Panc1 (cell line): ENCODE measurements at regions of chr20 and their contacts with region 1.

Region 1: DNA sequence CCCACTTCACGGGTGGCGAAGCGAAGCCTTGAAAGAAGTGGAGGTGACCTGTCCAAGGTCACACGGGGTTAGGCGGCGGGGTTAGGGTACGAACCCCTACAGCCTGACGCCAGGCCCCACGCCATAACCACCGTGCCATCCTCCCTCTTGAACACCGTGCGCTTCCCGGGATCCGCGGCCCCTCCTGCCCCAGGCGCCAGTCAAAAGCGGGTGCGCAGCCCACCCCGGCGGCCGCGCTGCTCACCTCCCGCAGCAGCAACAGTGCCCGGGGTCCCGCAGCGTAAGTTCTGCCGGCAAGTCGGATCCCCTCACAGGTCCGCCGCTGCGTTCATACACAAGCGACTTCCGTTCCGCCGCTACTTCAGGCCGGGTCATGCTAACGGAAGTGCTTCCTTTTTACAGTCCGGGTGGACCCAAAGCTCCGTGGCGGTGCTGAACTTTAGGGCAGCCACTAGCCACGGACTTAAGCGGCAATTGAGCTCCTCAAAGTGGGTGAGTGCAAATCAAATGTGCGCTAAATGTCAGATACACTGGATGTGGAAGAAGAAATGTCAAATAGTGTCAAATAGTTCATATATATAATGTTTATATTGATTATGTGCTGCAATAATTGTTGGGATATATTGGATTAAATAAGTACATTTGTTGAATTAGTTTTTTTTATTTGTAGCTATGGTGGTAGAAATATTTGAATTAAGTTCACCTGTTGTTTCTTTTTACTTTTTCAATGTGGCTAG is at the start of gene CDK5RAP1:
- DNase-seq: peak; percentile 71
- ATAC-seq: peak; percentile 98
- H3K4me3 ChIP-seq: peak within 1 kb of the TSS; percentile 89 to 99
- H3K27ac ChIP-seq: peak within 1 kb of the TSS; percentile 87
- H3K4me1 ChIP-seq: peaks cover 4% of the 10 kb centered on the region; the same call in 1 of the 2 replicates
- H3K27me3 ChIP-seq: no peaks in the 10 kb centered on the region
- CTCF ChIP-seq: no peak
- total RNA-seq, gene CDK5RAP1: 34.8 TPM

Region 2: GRCh38 chr20:33217052-33217451 is 184.3 kb before region 1 on chr20 and contains the start of gene BPIFA3:
- CTCF ChIA-PET with region 1: no interaction called
- POLR2A ChIA-PET with region 1: no interaction called
- in situ Hi-C with region 1: no loop called
- intact Hi-C with region 1: no loop called
- DNase-seq: no peak
- ATAC-seq: no peak
- H3K4me3 ChIP-seq: no peak within 1 kb of the TSS
- H3K27ac ChIP-seq: no peak within 1 kb of the TSS
- H3K4me1 ChIP-seq: no peaks in the 10 kb centered on the region
- H3K27me3 ChIP-seq: peaks cover 20% of the 10 kb centered on the region
- CTCF ChIP-seq: no peak
- total RNA-seq, gene BPIFA3: not detected

Region 3: GRCh38 chr20:33318096-33318429 is 83.3 kb before region 1 on chr20:
- CTCF ChIA-PET with region 1: no interaction called
- POLR2A ChIA-PET with region 1: no interaction called
- in situ Hi-C with region 1: no loop called
- intact Hi-C with region 1: no loop called
- DNase-seq: no peak
- ATAC-seq: no peak
- H3K4me3 ChIP-seq: no peak overlapping the region
- H3K27ac ChIP-seq: no peak overlapping the region
- H3K4me1 ChIP-seq: no peaks in the 10 kb centered on the region; the same call in 1 of the 2 replicates
- H3K27me3 ChIP-seq: no peaks in the 10 kb centered on the region
- CTCF ChIP-seq: no peak

Region 4: DNA sequence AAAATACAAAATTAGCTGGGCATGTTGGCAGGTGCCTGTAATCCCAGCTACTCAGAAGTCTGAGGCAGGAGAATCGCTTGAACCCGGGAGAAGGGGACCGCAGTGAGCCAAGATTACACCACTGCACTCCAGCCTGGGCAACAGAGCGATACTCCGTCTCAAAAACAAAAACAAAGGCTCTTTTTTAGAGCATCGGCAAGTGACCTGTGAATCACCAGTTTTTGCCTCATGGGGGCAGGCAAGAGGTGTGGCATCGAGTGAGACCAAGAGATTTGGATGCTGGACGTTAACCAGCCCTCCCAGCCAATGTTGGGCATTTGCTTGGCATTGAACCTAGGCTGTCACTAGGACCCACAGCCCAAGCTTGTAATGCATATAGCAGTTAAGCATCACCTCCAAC is 14.6 kb after region 1 on chr20:
- CTCF ChIA-PET with region 1: no interaction called
- POLR2A ChIA-PET with region 1: interaction called, 15 read pairs
- in situ Hi-C with region 1: no loop called
- intact Hi-C with region 1: no loop called
- DNase-seq: no peak
- ATAC-seq: no peak
- H3K4me3 ChIP-seq: no peak overlapping the region
- H3K27ac ChIP-seq: no peak overlapping the region
- H3K4me1 ChIP-seq: no peaks in the 10 kb centered on the region
- H3K27me3 ChIP-seq: no peaks in the 10 kb centered on the region
- CTCF ChIP-seq: no peak

Region 5: DNA sequence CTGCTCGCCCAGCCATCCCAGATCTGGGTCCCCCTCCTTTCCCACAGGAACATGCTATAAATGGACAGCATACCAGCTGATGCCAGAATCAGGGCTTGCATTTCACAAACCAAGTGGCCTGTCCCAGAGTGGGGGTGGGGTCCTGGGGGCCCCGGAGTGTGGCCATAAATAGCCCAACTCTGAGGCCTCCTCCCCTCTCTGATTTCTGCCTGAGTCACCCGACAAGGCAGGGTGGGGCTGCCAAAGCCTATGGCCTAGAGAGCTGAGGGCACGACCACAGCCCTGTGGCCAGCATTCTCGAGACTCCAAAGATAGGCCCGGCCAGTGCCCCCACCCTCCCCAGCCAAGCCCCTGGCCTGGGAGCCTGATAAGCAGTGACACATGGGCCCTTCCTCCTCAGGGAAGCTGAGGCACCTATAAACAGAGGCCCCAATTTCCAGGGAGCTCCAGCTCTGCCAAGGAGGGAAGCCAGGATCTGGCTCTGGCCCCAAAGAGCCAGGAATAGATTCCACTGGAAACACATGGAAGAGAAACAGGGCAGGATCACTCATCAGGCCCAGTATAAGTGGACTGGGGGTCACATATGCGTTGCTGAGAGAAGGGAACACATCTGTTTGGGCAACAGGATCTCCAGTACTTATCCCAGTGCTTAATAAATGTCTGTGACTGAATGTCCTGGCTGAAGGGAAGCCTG is 21.9 kb after region 1 on chr20:
- CTCF ChIA-PET with region 1: no interaction called
- POLR2A ChIA-PET with region 1: interaction called, 13 read pairs
- in situ Hi-C with region 1: no loop called
- intact Hi-C with region 1: no loop called
- DNase-seq: no peak
- ATAC-seq: no peak; the same call in 1 of the 2 replicates
- H3K4me3 ChIP-seq: no peak overlapping the region
- H3K27ac ChIP-seq: no peak overlapping the region
- H3K4me1 ChIP-seq: no peaks in the 10 kb centered on the region
- H3K27me3 ChIP-seq: no peaks in the 10 kb centered on the region
- CTCF ChIP-seq: no peak

Region 6: GRCh38 chr20:33437141-33437911 is 36.0 kb after region 1 on chr20:
- CTCF ChIA-PET with region 1: no interaction called
- POLR2A ChIA-PET with region 1: no interaction called
- in situ Hi-C with region 1: no loop called
- intact Hi-C with region 1: no loop called
- DNase-seq: no peak
- ATAC-seq: no peak
- H3K4me3 ChIP-seq: no peak overlapping the region
- H3K27ac ChIP-seq: no peak overlapping the region
- H3K4me1 ChIP-seq: no peaks in the 10 kb centered on the region
- H3K27me3 ChIP-seq: no peaks in the 10 kb centered on the region
- CTCF ChIP-seq: no peak